ENCODE measurements at regions of chr18 and their contacts with region 1.

Region 1: GRCh38 chr18:63936156-63936931 is 12.8 kb upstream of the HMSD start:
- DNase-seq: peak; percentile 82
- H3K4me3 Mint-ChIP-seq: peak overlapping the region; percentile 67
- H3K27ac Mint-ChIP-seq: no peak overlapping the region
- H3K4me1 Mint-ChIP-seq: no peaks in the 10 kb centered on the region
- H3K27me3 Mint-ChIP-seq: peaks cover 8% of the 10 kb centered on the region

Region 2: GRCh38 chr18:63518178-63519012 is 417.9 kb before region 1 on chr18:
- CTCF ChIA-PET with region 1: interaction called, 69 read pairs
- POLR2A ChIA-PET with region 1: no interaction called
- intact Hi-C with region 1: loop called (anchors 5 kb)
- DNase-seq: peak; percentile 62
- H3K4me3 Mint-ChIP-seq: no peak overlapping the region
- H3K27ac Mint-ChIP-seq: no peak overlapping the region
- H3K4me1 Mint-ChIP-seq: no peaks in the 10 kb centered on the region
- H3K27me3 Mint-ChIP-seq: peaks cover 5% of the 10 kb centered on the region

Region 3: GRCh38 chr18:63882333-63883141 is 53.8 kb before region 1 on chr18:
- CTCF ChIA-PET with region 1: interaction called, 5 read pairs
- POLR2A ChIA-PET with region 1: no interaction called
- intact Hi-C with region 1: loop called (anchors 2 kb)
- DNase-seq: no peak
- H3K4me3 Mint-ChIP-seq: no peak overlapping the region
- H3K27ac Mint-ChIP-seq: no peak overlapping the region
- H3K4me1 Mint-ChIP-seq: peaks cover 13% of the 10 kb centered on the region
- H3K27me3 Mint-ChIP-seq: peaks cover 12% of the 10 kb centered on the region

Region 4: GRCh38 chr18:63949068-63949737 is 12.9 kb after region 1 on chr18 and contains the start of gene HMSD:
- CTCF ChIA-PET with region 1: interaction called, 10 read pairs
- POLR2A ChIA-PET with region 1: no interaction called
- intact Hi-C with region 1: loop called (anchors 1 kb)
- DNase-seq: peak; percentile 88
- H3K4me3 Mint-ChIP-seq: peak within 1 kb of the TSS; percentile 85
- H3K27ac Mint-ChIP-seq: peak within 1 kb of the TSS; percentile 86
- H3K4me1 Mint-ChIP-seq: peaks cover 45% of the 10 kb centered on the region
- H3K27me3 Mint-ChIP-seq: peaks cover 13% of the 10 kb centered on the region
- total RNA-seq, gene HMSD: 18.9 to 19.5 TPM

Region 5: DNA sequence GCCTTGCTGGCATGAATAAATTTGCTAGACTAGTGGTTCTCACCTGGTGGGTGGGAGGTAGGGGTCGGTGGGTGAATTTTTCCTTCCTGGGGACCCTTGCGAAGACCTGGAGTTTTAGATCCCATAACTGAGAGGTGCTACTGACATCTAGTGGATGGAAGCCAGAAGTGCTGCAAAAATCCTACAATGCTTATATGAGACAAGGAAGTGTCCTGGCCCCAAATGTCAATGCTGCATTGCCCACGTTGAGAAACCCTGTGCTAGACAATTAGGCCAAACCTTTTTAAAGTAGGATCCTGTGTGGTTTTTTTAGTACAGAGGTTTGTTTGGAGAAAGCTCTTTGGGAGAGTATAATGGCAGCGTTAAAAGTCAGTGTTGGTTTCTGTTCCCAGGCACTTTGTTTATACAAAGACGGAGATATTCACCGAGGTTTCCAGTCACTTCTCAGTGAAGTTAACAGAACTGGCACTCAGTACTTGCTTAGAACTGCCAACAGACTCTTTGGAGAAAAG is 43.1 kb after region 1 on chr18:
- CTCF ChIA-PET with region 1: interaction called, 14 read pairs
- POLR2A ChIA-PET with region 1: no interaction called
- intact Hi-C with region 1: loop called (anchors 5 kb)
- DNase-seq: peak; percentile 36
- H3K4me3 Mint-ChIP-seq: no peak overlapping the region
- H3K27ac Mint-ChIP-seq: no peak overlapping the region
- H3K4me1 Mint-ChIP-seq: peaks cover 21% of the 10 kb centered on the region
- H3K27me3 Mint-ChIP-seq: no peaks in the 10 kb centered on the region